ENCODE measurements at regions of chr7 and their contacts with region 1.

Region 1: GRCh38 chr7:129825496-129826267 is 127.1 kb downstream of the UBE2H start:
- DNase-seq: peak; percentile 71 to 73
- ATAC-seq: peak; percentile 63 to 68
- H3K4me3 ChIP-seq: peak overlapping the region; percentile 65 to 86 (median 76)
- H3K27ac ChIP-seq: peak overlapping the region; percentile 66 to 75 (median 74)
- H3K4me1 ChIP-seq: peaks cover 14 to 25% of the 10 kb centered on the region in 2 donors
- H3K27me3 ChIP-seq: no peaks in the 10 kb centered on the region
- CTCF ChIP-seq: peak; percentile 40 to 100 (median 81)
- POLR2A ChIP-seq: no peak

Region 2: DNA sequence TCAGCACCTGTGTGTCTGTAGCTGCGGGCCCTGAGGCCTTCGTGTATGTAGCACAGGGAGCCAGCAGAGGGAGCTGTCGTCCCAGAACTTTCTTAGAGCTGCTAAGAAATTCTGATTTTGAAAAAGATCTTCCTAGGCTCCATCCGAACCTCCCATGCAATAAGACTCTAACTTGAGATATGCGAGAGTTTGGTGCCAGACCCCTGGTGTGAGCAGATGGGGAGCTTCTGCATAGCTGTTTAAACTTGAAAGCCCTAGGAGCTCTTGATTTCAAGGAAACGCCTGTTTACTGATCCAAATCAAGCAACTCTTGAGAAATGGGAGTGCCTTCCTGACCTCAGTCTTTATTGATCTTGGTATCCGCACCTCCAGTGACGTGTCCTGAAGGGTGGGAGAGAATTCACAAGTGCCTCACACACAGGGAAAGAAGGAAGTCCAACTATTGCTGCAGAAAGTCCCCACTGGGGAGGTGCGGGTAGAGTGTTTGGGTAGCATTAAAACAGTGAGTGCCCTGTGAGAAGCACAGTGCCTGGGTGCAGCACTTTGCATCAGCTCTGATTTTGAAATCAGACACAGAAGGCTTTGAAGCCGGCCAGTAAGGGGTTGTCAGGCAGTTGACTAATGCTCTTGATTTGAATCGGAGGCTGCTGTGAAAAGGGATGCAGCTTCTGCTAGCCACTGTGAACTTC is 457.8 kb before region 1 on chr7:
- in situ Hi-C with region 1: no loop called
- intact Hi-C with region 1: loop called (anchors 10 kb)
- DNase-seq: peak; percentile 53 to 74
- ATAC-seq: peak; percentile 86 to 94
- H3K4me3 ChIP-seq: no peak overlapping the region
- H3K27ac ChIP-seq: peak overlapping the region in 3 of 4 donors; percentile 28 to 47 (median 28)
- H3K4me1 ChIP-seq: peaks cover 12 to 17% of the 10 kb centered on the region in 2 donors
- H3K27me3 ChIP-seq: no peaks in the 10 kb centered on the region
- CTCF ChIP-seq: peak; percentile 77 to 92 (median 88)
- POLR2A ChIP-seq: no peak

Region 3: GRCh38 chr7:129611246-129612111 is 214.2 kb before region 1 on chr7 and contains the start of gene NRF1:
- in situ Hi-C with region 1: no loop called
- intact Hi-C with region 1: loop called (anchors 1 kb)
- DNase-seq: peak; percentile 82 to 89
- ATAC-seq: peak; percentile 88 to 89
- H3K4me3 ChIP-seq: peak within 1 kb of the TSS; percentile 75 to 91 (median 80)
- H3K27ac ChIP-seq: peak within 1 kb of the TSS; percentile 91 to 97 (median 94)
- H3K4me1 ChIP-seq: peaks cover 20 to 25% of the 10 kb centered on the region in 2 donors
- H3K27me3 ChIP-seq: no peaks in the 10 kb centered on the region
- CTCF ChIP-seq: peak in 2 of 5 experiments; percentile 29 to 43
- POLR2A ChIP-seq: peak; percentile 77 to 81
- total RNA-seq, gene NRF1: 11.3 to 26.3 (median 18.0) TPM

Region 4: DNA sequence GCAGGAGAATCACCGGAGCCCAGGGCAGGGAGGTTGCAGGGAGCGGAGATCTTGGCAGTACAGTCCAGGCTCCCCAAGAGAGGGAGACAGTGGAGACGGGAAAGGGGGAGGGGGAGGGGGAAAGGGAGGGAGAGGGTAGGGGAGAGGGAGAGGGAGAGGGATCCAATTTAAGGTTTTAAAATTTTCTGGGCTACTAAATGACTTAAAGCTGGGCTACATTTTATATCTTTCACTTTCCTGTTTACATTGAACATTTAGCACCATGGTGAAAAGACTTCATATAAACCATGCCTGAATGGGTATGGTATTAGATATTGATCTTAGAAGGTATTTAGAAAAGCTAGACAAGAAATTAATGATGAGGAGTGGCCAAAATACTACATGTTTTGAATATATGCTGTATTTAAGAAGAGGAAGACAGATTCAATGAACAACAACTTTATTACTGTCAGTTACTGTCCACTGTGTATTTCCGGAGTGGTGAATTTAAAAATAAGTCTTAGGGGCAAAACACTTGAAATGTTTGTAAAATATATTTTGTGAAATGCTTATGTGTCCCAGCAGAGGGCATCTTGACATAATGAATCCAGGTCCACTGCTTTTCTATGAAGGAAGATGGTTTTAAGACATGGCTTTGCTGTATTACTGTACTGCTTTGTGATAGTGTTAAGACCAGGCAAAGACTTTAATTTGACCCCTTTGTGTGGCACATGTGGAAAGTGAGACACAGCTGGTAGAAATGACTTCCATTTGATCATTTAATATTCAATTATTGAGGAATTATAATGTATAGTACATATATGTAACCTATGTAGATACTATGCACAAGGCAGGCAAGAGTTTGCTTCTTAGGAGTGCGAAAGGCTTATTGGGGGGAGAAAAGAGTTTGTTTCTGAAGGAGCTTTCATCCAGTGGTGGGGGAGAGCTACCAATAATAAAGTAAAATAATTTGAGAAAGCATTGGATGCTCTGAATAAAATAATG is 161.4 kb before region 1 on chr7:
- in situ Hi-C with region 1: loop called in 3 of 4 experiments (anchors 10 to 25 kb)
- intact Hi-C with region 1: loop called (anchors 1 kb)
- DNase-seq: no peak
- ATAC-seq: no peak
- H3K4me3 ChIP-seq: no peak overlapping the region
- H3K27ac ChIP-seq: no peak overlapping the region
- H3K4me1 ChIP-seq: no peaks in the 10 kb centered on the region
- H3K27me3 ChIP-seq: no peaks in the 10 kb centered on the region
- CTCF ChIP-seq: peak; percentile 41 to 45 (median 43)
- POLR2A ChIP-seq: no peak

Region 5: GRCh38 chr7:129741743-129742213 is 83.9 kb before region 1 on chr7:
- in situ Hi-C with region 1: no loop called
- intact Hi-C with region 1: loop called (anchors 2 kb)
- DNase-seq: peak in 1 of 2 donors; percentile 31
- ATAC-seq: peak; percentile 3 to 12
- H3K4me3 ChIP-seq: no peak overlapping the region
- H3K27ac ChIP-seq: peak overlapping the region; percentile 85 to 93 (median 89)
- H3K4me1 ChIP-seq: peaks cover 44 to 48% of the 10 kb centered on the region in 2 donors
- H3K27me3 ChIP-seq: no peaks in the 10 kb centered on the region
- CTCF ChIP-seq: peak in 1 of 5 experiments; percentile 21
- POLR2A ChIP-seq: no peak

Region 6: DNA sequence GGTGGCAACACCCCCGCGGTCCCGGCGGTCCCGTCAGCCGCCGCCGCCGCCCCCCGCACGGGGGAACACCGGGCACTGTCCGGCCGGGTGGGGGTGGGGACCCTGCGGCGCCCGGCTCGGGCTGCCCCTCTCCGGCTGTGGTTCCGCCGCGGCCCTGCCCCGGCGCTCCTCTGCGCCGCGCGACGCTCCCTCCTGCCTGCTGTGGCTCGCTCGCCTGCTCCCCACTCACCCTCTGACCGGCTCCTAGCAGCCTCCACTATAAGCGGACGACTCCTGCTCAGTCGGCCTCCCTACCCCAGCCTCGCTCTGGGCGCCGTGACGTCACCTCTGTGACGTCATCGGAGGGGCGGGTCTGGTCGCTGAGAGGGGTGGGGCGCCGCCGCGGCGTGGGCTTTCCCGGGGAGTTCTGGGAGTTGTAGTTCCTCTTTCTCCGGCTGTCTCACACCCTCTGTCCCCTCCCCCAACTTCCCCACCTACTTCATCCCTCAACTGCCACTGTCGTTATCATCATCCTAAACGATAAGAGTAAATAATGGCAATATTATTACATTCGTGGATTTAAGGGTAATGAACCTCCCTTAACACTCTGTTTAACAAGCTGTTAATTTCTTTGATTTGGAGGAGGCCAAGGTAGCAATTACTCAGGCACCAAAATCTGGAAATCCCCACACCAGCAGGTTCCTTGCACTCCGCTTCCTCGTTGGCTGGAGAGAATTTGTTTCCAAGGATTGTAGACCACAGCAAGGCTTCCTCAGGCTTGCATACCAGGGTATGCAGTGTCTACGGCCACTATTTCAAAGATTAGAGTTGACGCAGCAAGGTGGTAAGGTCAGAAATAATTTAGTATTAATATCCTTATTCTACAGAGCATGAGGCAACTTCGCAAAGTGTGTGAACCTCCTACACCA is 127.2 kb after region 1 on chr7 and contains the start of gene UBE2H:
- in situ Hi-C with region 1: loop called in 1 of 4 experiments (anchors 25 kb)
- intact Hi-C with region 1: loop called (anchors 2 kb)
- DNase-seq: peak; percentile 88 to 90
- ATAC-seq: peak; percentile 71 to 76
- H3K4me3 ChIP-seq: peak within 1 kb of the TSS; percentile 81 to 97 (median 86)
- H3K27ac ChIP-seq: peak within 1 kb of the TSS; percentile 92 to 99 (median 99)
- H3K4me1 ChIP-seq: peaks cover 18 to 23% of the 10 kb centered on the region in 2 donors
- H3K27me3 ChIP-seq: no peaks in the 10 kb centered on the region
- CTCF ChIP-seq: peak in 2 of 5 experiments; percentile 8 to 25
- POLR2A ChIP-seq: peak; percentile 98 to 100
- total RNA-seq, gene UBE2H: 82.7 to 162 (median 103) TPM

Measured in gastrocnemius medialis (tissue), 4 donors.